Activated CD4-positive, alpha-beta T cell treated with anti-CD3 and anti-CD28 coated beads for 36 hours (primary cell): ENCODE measurements at regions of chr11 and their contacts with region 1.

Region 1: DNA sequence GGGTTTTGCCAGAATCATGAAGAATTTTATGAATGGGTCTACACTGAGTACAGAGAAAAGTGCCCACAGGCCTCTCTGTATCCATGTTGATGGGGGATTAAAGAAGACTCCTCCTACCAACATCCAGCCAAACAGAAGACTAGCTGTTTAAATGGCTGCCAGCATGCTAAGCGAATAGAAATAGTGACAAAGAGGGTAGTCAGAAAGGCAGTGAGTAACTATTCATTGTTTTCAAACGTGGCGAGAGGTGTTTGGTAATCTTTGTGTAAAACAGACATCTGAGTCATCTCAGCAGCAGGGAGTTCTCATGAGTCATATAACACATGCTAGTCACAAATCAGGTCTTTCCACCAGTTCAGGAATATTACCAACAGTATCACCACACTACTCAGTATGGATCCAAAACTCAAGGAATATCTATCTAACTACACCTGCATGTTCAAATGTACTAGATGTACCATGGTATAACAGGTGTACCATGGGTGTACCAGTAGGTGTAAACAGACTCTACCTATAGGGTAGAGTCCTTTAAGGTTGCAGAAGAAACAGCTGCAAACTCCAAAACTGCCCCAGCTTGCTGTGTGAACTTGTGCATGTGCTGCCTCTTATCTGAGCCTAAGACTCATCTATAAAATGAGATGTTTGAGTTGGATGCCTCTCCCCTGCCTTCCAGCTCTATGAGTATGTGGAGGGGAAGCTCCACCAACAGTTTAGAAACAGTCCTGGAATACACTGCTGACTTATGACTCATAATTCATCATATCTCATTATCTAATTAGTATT is 82.0 kb downstream of the SLC1A2 start:
- DNase-seq: peak; percentile 46
- ATAC-seq: peak; percentile 96
- H3K4me3 Mint-ChIP-seq: no peak overlapping the region
- H3K27ac Mint-ChIP-seq: peak overlapping the region; percentile 19
- H3K4me1 Mint-ChIP-seq: peaks cover 36% of the 10 kb centered on the region
- H3K27me3 Mint-ChIP-seq: no peaks in the 10 kb centered on the region

Region 2: DNA sequence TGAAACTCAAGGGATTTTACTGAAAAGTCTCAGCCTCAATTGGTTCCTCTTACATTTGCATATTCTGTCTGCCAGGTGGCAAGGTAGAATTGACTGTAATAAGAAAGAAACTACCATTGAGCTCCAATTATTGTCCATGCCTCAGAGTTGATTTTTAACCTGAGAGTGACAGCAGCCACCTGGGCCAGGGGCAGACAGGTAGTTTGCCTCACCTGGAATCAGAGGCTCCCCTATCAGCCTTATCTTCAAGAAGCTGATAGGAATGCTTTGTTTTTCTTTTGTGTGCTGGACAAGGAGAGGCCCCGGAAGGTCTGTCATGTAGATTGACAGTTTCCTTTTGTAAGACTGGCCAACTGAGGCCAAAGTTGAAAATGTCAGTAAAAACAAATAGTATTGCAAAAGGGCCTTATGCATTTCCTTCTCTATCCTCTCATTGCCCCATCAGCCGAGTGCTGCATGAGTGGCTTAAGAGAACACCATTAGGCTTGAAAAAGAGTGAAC is 164.3 kb before region 1 on chr11:
- CTCF ChIA-PET with region 1: no interaction called
- POLR2A ChIA-PET with region 1: no interaction called
- intact Hi-C with region 1: loop called in 1 of 2 experiments (anchors 2 kb)
- DNase-seq: no peak
- ATAC-seq: no peak
- H3K4me3 Mint-ChIP-seq: no peak overlapping the region
- H3K27ac Mint-ChIP-seq: peak overlapping the region; percentile 83
- H3K4me1 Mint-ChIP-seq: peaks cover 97% of the 10 kb centered on the region
- H3K27me3 Mint-ChIP-seq: no peaks in the 10 kb centered on the region

Region 3: GRCh38 chr11:35246745-35247144 is 90.6 kb before region 1 on chr11:
- CTCF ChIA-PET with region 1: no interaction called
- POLR2A ChIA-PET with region 1: no interaction called
- intact Hi-C with region 1: loop called in 1 of 2 experiments (anchors 5 kb)
- DNase-seq: no peak
- ATAC-seq: no peak
- H3K4me3 Mint-ChIP-seq: no peak overlapping the region
- H3K27ac Mint-ChIP-seq: no peak overlapping the region
- H3K4me1 Mint-ChIP-seq: peaks cover 41% of the 10 kb centered on the region
- H3K27me3 Mint-ChIP-seq: no peaks in the 10 kb centered on the region

Region 4: DNA sequence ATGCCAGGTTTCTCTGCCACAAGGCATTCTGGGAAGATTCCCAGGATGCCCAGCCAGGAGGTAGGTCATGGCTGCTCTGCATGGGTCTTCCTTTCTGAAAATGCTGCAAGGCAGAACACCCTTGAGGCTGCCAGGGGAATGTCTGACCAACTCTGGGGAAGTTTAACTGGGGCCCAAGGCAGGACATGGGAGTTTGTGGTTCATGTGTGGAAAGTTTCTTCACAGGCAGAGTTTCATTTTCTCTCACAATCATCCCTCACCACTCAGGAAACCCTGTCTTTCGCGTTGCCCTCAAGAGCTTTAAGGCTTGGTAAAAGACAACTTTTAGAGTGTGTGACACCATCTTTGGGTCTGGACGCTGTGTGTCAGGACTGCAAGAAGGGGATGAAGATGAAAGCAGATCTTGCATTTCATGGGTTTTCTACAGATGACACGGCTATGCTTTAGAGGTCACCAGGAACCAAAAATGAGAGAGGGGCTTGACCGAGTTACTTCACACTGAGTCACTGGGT is 64.9 kb before region 1 on chr11:
- CTCF ChIA-PET with region 1: no interaction called
- POLR2A ChIA-PET with region 1: no interaction called
- intact Hi-C with region 1: loop called (anchors 1 to 2 kb)
- DNase-seq: peak; percentile 65
- ATAC-seq: peak; percentile 84
- H3K4me3 Mint-ChIP-seq: peak overlapping the region; percentile 16
- H3K27ac Mint-ChIP-seq: peak overlapping the region; percentile 81
- H3K4me1 Mint-ChIP-seq: peaks cover 46% of the 10 kb centered on the region
- H3K27me3 Mint-ChIP-seq: peaks cover 2% of the 10 kb centered on the region

Region 5: GRCh38 chr11:35288817-35289541 is 48.3 kb before region 1 on chr11:
- CTCF ChIA-PET with region 1: interaction called, 3 read pairs
- POLR2A ChIA-PET with region 1: no interaction called
- intact Hi-C with region 1: loop called in 1 of 2 experiments (anchors 1 kb)
- DNase-seq: peak; percentile 15
- ATAC-seq: peak; percentile 26
- H3K4me3 Mint-ChIP-seq: no peak overlapping the region
- H3K27ac Mint-ChIP-seq: no peak overlapping the region
- H3K4me1 Mint-ChIP-seq: peaks cover 25% of the 10 kb centered on the region
- H3K27me3 Mint-ChIP-seq: no peaks in the 10 kb centered on the region

Region 6: DNA sequence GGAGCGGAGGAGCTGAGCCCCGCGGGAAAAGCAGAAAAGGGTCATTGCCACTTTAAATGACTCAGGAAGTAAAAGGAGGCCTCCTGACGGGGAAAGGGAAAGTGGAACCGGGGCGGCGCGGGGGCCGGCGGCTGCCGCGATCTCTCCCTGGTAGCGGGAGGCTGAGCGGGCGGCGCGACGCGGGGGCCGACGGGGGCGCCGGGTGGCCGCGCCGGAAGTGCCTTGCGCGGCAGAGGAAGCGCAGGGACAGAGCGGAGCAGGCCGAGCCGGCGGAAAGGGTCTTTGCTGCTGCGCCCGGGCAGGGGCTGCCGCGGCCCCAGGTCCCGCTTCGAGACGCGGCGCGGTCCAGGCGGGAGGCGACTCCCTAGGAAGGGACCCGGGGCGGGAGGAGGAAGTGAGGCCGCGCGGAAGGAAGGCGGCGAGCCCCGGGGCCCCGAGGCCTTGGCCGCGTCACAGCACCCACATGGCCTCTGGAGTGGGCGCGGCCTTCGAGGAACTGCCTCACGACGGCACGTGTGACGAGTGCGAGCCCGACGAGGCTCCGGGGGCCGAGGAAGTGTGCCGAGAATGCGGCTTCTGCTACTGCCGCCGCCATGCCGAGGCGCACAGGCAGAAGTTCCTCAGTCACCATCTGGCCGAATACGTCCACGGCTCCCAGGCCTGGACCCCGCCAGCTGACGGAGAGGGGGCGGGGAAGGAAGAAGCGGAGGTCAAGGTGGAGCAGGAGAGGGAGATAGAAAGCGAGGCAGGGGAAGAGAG is 325.5 kb after region 1 on chr11 and contains the start of gene TRIM44:
- CTCF ChIA-PET with region 1: no interaction called
- POLR2A ChIA-PET with region 1: no interaction called
- intact Hi-C with region 1: loop called in 1 of 2 experiments (anchors 10 kb)
- DNase-seq: peak; percentile 92
- ATAC-seq: peak; percentile 86
- H3K4me3 Mint-ChIP-seq: peak within 1 kb of the TSS; percentile 83
- H3K27ac Mint-ChIP-seq: peak within 1 kb of the TSS; percentile 97
- H3K4me1 Mint-ChIP-seq: peaks cover 41% of the 10 kb centered on the region
- H3K27me3 Mint-ChIP-seq: peaks cover under 1% of the 10 kb centered on the region
- total RNA-seq, gene TRIM44: 38.1 to 39.9 TPM

Region 7: DNA sequence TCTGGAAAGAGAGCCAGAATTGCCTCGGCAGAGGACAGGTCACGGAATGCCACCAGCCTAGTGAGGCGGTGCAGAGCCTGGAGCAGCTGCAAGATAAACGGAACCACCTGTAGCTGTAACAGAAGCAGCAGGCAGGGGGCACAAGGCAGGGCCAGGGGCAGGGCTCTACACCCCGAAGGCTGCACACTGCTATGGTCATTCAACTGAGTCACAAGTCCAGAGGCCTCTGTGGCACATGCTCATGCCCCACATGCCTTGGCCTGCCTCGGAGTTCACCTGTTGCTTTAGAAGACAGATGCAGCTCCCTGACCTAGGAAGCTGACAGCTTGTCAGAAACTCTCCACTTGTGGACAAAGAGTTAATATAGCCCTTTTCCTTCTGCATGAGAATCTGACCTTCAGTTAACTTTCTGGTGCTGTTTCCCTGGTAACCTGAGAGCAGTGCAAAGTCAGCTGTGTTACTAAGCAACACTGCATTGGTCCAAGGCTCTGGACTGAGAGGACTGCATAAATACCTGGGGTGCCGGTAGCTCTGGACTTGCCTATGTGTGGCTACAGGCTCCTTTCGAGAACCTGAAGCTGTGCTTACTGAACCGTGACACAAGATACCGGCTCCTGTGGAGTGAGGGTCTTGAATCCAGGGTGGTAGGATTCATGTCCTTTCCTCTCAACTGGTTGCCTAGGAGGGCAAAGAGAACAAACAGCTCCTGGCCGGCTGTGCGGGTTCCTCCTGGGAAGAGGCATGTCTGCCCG is 941.4 kb after region 1 on chr11:
- CTCF ChIA-PET with region 1: no interaction called
- POLR2A ChIA-PET with region 1: no interaction called
- intact Hi-C with region 1: no loop called
- DNase-seq: no peak
- ATAC-seq: no peak
- H3K4me3 Mint-ChIP-seq: no peak overlapping the region
- H3K27ac Mint-ChIP-seq: no peak overlapping the region
- H3K4me1 Mint-ChIP-seq: peaks cover 2% of the 10 kb centered on the region
- H3K27me3 Mint-ChIP-seq: no peaks in the 10 kb centered on the region